AG04450 (cell line): ENCODE measurements at regions of chr17 and their contacts with region 1.

Region 1: GRCh38 chr17:30093463-30094147 is 23.0 kb upstream of the NSRP1 start:
- DNase-seq: no peak
- H3K4me3 ChIP-seq: no peak overlapping the region
- H3K27ac ChIP-seq: no peak overlapping the region
- H3K27me3 ChIP-seq: peaks cover 3% of the 10 kb centered on the region
- CTCF ChIP-seq: peak; percentile 71

Region 2: DNA sequence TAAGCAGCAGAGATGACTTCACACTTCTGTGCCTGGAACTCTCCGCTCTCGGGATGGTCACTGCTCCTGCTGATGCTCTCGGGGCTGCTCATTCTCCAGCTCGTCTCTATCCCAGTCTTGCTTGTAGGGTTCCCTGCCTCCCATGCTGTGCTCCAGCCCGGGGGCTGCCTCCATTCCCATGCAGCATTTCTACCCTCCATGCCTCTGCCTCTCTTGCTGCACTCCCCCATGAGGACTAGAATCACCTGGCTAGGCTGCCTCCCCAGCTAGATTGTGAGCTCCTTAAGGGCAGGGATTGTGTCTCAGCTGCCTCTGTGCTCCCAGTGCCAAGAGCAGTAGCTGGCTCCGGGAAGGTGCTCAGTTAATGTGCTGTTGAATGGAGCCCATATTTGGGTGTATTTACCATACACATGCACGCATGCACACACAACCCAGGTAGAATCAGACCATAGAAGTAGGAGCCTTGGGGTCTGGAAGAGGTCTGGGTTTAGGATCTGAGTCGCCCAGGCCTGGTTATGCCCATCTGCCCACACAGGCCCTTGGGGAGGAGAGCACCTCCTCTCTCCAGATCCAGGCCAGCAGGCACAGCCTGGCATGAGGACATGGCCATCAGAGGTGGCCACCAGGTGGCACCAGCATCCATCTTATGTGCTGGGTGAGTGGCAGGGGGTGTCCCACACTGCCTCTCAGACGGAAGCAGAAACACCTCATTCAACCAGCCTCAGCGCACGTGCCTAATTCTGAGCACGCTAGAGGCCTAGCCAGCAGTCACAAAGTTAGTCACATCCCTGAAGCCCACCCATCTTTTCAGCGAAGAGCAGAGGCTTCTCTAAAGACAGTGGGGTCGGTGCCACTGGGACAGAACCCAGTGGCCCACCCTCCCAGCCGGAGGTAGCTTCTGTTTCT is 513.5 kb before region 1 on chr17:
- CTCF ChIA-PET with region 1: interaction called, 36 read pairs
- POLR2A ChIA-PET with region 1: no interaction called
- DNase-seq: no peak
- H3K4me3 ChIP-seq: no peak overlapping the region
- H3K27ac ChIP-seq: no peak overlapping the region
- H3K27me3 ChIP-seq: no peaks in the 10 kb centered on the region
- CTCF ChIP-seq: peak; percentile 79

Region 3: DNA sequence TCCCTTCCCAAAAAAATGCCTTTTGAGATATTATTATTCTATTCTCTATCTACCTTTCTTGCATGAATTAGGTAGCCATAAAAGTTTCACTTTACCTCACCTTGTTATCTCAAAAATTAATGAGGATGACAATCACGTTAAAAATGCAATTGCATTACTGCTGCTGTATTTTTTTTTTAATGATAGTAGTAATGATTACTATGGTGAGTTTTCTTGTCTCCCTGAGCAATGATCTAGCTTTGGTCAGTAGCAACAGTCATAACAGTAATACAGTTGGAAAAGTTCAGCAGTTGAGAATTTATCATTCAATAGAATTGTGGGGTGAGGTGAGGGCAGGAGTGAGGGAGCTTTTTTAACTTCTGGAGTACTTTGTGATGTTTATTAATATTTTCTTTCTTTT is 152.3 kb before region 1 on chr17 and contains the start of gene EFCAB5:
- CTCF ChIA-PET with region 1: interaction called, 12 read pairs
- POLR2A ChIA-PET with region 1: no interaction called
- DNase-seq: no peak
- H3K4me3 ChIP-seq: no peak within 1 kb of the TSS
- H3K27ac ChIP-seq: no peak within 1 kb of the TSS
- H3K27me3 ChIP-seq: no peaks in the 10 kb centered on the region
- CTCF ChIP-seq: no peak
- polyA plus RNA-seq, gene EFCAB5: 0.07 and 0.24 TPM in 2 replicates

Region 4: DNA sequence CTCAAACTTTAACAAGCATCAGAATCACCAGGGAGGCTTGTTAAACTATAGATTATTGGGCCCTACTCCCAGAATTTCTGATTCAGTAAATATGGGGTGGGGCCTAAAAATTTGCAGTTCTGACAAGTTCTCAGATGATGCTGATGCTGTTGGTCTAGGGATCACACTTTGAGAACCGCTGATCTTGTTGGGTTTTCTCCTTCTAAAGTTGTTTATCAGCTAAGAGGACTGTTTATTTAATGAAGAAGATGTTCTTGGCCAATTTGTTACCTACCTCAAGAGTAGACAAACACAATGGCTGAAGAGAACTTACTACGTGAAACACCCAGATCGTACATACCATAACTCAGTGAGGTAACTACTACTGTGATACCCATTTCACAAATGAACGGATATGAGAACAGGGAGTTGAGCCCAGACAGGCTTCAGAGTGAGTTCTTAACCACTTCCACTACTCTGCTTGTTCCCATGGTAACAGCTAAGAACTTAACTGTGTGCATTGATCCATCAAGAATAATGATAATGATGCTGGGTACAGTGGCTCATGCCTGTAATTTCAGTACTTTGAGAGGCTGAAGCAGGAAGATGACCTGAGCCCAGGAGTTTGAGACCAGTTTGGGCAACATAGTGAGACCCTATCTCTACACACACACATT is 62.3 kb before region 1 on chr17:
- CTCF ChIA-PET with region 1: interaction called, 118 read pairs
- POLR2A ChIA-PET with region 1: no interaction called
- DNase-seq: no peak
- H3K4me3 ChIP-seq: no peak overlapping the region
- H3K27ac ChIP-seq: no peak overlapping the region
- H3K27me3 ChIP-seq: peaks cover 3% of the 10 kb centered on the region
- CTCF ChIP-seq: no peak

Region 5: GRCh38 chr17:30062372-30062771 is 31.2 kb before region 1 on chr17:
- CTCF ChIA-PET with region 1: interaction called, 10 read pairs
- POLR2A ChIA-PET with region 1: no interaction called
- DNase-seq: no peak
- H3K4me3 ChIP-seq: no peak overlapping the region
- H3K27ac ChIP-seq: no peak overlapping the region
- H3K27me3 ChIP-seq: peaks cover 9% of the 10 kb centered on the region
- CTCF ChIP-seq: no peak

Region 6: GRCh38 chr17:30104575-30105339 is 11.2 kb after region 1 on chr17:
- CTCF ChIA-PET with region 1: interaction called, 178 read pairs
- POLR2A ChIA-PET with region 1: no interaction called
- DNase-seq: peak; percentile 41
- H3K4me3 ChIP-seq: peak overlapping the region; percentile 63
- H3K27ac ChIP-seq: no peak overlapping the region
- H3K27me3 ChIP-seq: peaks cover 3% of the 10 kb centered on the region
- CTCF ChIP-seq: peak; percentile 94

Region 7: GRCh38 chr17:30124273-30124796 is 30.7 kb after region 1 on chr17:
- CTCF ChIA-PET with region 1: interaction called, 10 read pairs
- POLR2A ChIA-PET with region 1: no interaction called
- DNase-seq: no peak
- H3K4me3 ChIP-seq: no peak overlapping the region
- H3K27ac ChIP-seq: no peak overlapping the region
- H3K27me3 ChIP-seq: no peaks in the 10 kb centered on the region
- CTCF ChIP-seq: no peak